T-cell (primary cell): ENCODE measurements at regions of chr1 and their contacts with region 1.

Region 1: GRCh38 chr1:244128591-244129383 is 77.7 kb downstream of the ZBTB18 start:
- DNase-seq: no peak
- ATAC-seq: no peak
- H3K4me3 ChIP-seq: no peak overlapping the region
- H3K4me3 Mint-ChIP-seq: no peak overlapping the region
- H3K27ac ChIP-seq: no peak overlapping the region
- H3K27ac Mint-ChIP-seq: no peak overlapping the region
- H3K4me1 ChIP-seq: no peaks in the 10 kb centered on the region
- H3K4me1 Mint-ChIP-seq: peaks cover 5 to 11% (median 9%) of the 10 kb centered on the region in 3 donors
- H3K27me3 ChIP-seq: no peaks in the 10 kb centered on the region
- H3K27me3 Mint-ChIP-seq: peaks cover 0 to 16% of the 10 kb centered on the region in 2 donors

Region 2: GRCh38 chr1:244092293-244092963 is 36.4 kb before region 1 on chr1:
- CTCF ChIA-PET with region 1: no interaction called
- POLR2A ChIA-PET with region 1: no interaction called
- DNase-seq: no peak
- ATAC-seq: no peak
- H3K4me3 ChIP-seq: no peak overlapping the region
- H3K4me3 Mint-ChIP-seq: no peak overlapping the region
- H3K27ac ChIP-seq: no peak overlapping the region
- H3K27ac Mint-ChIP-seq: no peak overlapping the region
- H3K4me1 ChIP-seq: no peaks in the 10 kb centered on the region
- H3K4me1 Mint-ChIP-seq: peaks cover 0 to 2% (median 0%) of the 10 kb centered on the region in 3 donors
- H3K27me3 ChIP-seq: peaks cover 0 to 2% of the 10 kb centered on the region in 2 experiments
- H3K27me3 Mint-ChIP-seq: peaks cover 0 to 5% of the 10 kb centered on the region in 2 donors

Region 3: GRCh38 chr1:244150665-244151064 is 21.9 kb after region 1 on chr1:
- CTCF ChIA-PET with region 1: no interaction called
- POLR2A ChIA-PET with region 1: no interaction called
- DNase-seq: no peak
- ATAC-seq: no peak
- H3K4me3 ChIP-seq: no peak overlapping the region
- H3K4me3 Mint-ChIP-seq: no peak overlapping the region
- H3K27ac ChIP-seq: no peak overlapping the region
- H3K27ac Mint-ChIP-seq: no peak overlapping the region
- H3K4me1 ChIP-seq: no peaks in the 10 kb centered on the region
- H3K4me1 Mint-ChIP-seq: no peaks in the 10 kb centered on the region
- H3K27me3 ChIP-seq: peaks cover 0 to 2% of the 10 kb centered on the region in 2 experiments
- H3K27me3 Mint-ChIP-seq: no peaks in the 10 kb centered on the region

Region 4: GRCh38 chr1:244280859-244281258 is 152.1 kb after region 1 on chr1:
- CTCF ChIA-PET with region 1: interaction called in 1 of 2 experiments, 10 read pairs
- POLR2A ChIA-PET with region 1: no interaction called
- DNase-seq: no peak
- ATAC-seq: no peak
- H3K4me3 ChIP-seq: no peak overlapping the region
- H3K4me3 Mint-ChIP-seq: no peak overlapping the region
- H3K27ac ChIP-seq: no peak overlapping the region
- H3K27ac Mint-ChIP-seq: no peak overlapping the region
- H3K4me1 ChIP-seq: no peaks in the 10 kb centered on the region
- H3K4me1 Mint-ChIP-seq: no peaks in the 10 kb centered on the region
- H3K27me3 ChIP-seq: peaks cover 0 to 2% of the 10 kb centered on the region in 2 experiments
- H3K27me3 Mint-ChIP-seq: peaks cover 0 to 4% of the 10 kb centered on the region in 2 donors